ENCODE measurements at regions of chr5 and their contacts with region 1.

Region 1: DNA sequence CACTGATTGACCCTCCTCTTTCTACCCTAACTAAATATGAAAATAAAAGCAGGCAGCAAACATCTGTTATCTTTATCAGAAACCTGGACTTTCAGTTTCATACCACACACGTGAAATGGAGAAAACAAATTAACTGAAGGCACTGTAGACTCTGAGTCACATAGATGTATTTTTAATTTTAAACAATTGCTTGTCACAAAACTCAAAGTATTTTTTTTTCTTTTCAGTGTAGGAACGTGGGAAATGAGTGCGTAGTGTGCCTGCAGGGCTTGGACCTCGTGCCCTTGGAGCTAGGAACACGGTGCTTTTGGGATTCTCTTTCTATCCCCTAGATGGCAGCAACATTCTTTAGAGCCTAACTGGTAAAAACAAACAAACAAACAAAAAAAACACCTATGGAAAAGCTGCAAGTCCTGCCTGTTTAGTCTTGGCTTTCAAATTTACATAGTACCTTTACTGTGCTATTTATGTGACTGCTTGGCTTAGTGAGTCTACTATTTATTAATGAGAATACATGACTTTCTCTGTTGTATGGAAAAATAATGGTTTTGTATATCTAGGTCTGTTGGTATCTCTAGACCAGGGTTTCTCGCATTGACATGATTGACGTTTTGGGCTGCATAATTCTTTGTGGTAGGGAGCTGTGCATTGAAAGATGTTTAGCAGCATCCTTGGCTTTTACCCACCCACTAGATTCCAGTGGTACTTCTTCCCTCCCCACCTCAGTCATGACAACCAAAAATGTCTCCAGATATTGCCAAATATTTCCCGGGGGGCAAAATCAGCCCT is 16.8 kb upstream of the ACTBL2 start:
- DNase-seq: no peak
- ATAC-seq: peak; percentile 72

Region 2: DNA sequence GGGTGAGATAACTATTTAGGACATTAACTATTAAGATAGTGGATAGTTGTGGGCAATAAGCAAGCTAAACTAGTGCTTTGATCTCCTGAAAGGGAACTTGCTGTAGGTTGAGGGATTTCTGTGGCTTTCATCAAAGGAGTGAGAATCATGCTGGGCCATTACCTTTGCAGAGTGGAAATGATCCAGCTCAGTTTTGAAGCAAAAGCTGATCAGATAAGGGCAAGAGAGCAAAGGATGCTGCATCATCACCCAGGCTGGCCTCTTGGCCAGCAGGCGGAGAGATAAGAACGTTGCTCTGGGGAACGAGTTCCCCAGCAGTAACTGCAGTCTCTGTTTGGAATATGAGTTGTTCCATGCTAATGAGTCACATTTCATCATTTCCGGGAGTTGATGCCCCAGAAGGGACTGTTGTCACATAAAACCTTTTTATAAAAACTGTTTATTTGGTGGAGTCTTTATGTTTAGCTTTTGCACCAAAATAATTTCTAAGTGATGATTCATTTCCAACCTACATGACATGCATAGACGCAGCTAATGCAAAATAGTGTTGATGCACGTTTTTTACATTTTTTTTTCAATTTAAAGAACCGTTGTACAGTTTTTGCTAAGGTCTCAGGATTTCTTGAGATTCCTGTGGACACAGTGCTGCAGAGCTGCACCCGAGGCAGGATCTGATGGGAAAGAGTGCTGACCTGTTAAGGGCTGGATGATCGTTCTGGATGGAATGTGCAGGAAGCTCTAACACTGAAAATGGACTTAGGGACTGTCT is 116.2 kb before region 1 on chr5:
- intact Hi-C with region 1: no loop called
- DNase-seq: no peak
- ATAC-seq: peak; percentile 55

Region 3: GRCh38 chr5:57611177-57611576 is 111.7 kb after region 1 on chr5:
- intact Hi-C with region 1: no loop called
- DNase-seq: no peak
- ATAC-seq: no peak

Region 4: DNA sequence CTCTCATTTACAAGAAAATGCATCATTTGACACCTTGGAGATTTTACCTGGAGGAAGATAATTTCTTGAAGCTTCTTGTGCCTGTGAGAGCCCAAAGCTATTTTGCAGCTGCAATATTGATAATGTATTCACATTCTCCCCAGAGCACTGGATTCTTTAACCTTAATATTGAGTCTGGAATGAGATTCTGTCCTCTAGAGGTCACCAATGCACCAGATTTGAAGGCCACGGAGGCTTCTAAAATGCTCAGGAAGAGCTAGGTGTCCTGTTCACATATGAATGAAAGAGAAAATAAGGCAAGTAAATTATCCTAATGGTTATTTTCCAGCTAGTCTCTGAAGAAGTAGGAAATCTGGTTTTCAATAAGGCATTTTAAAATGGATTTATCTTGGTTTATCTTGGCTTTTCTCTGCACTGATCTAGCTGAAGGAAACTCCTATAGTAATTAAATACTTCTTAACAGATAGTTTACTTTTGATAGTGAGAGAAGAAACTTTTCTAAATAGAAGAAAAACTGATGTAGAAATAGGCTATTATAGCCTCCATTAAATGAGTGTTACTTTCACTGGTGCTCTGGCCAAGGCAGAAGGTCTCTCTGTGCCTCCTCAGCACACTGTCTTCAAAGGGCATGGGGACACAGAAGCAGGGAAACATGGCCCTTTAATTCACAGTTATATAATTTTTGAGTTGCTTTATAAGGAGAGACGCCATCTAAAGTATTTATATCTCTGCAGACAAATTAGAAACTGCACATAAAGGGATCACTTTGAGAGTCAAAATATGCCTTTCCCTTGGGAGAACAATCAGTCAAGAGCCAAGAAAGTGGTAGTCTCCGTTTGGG is 280.1 kb after region 1 on chr5:
- intact Hi-C with region 1: loop called (anchors 5 kb)
- DNase-seq: no peak
- ATAC-seq: peak; percentile 87

Region 5: DNA sequence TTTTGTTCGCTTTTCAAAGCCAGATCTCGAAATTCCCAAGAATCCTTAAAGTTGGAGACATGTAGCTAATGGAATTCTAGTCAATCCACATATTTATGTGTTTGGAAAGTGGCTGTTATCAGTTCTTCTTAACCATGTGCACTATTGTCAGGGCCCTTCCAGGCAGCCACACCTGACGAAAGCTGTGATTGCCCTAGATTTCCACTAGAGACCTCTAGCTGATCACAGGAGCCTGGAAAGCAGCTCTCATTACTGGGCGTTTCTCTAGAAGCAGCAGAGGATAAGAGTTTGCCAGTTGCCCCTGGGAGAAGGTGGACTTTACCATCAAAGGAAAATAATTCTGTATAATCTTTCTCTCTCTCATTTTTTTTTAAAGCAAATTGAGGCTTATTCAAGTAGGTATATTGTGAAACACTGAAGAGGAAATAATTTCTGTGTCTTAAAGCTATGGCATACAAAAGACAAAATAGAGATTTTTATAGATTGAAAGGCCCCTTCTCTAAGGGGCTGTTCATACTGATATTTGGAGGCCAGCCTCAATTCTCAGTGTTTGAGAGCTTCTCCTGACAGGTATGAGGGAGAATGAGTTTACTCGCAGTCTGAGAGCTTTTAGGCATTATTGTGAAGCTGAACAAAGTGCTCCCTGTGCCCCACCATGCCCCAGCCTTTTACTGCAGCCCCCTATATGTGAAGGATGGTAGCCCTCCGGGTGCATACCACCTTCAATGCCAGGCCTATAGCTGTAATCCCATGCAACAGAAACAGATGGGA is 388.6 kb after region 1 on chr5:
- intact Hi-C with region 1: loop called (anchors 10 kb)
- DNase-seq: no peak
- ATAC-seq: peak; percentile 96

Region 6: GRCh38 chr5:58466939-58467338 is 967.5 kb after region 1 on chr5:
- intact Hi-C with region 1: loop called (anchors 5 kb)
- DNase-seq: no peak
- ATAC-seq: no peak

Measured in Right ventricle myocardium superior (tissue), 1 donor.